ENCODE measurements at regions of chr17 and their contacts with region 1.

Region 1: GRCh38 chr17:46876353-46876887 is 25.0 kb downstream of the WNT9B start:
- H3K4me3 Mint-ChIP-seq: no peak overlapping the region
- H3K27ac Mint-ChIP-seq: peak overlapping the region; percentile 90
- H3K4me1 Mint-ChIP-seq: peaks cover 67% of the 10 kb centered on the region
- H3K27me3 Mint-ChIP-seq: no peaks in the 10 kb centered on the region

Region 2: GRCh38 chr17:46922804-46923635 is 46.6 kb after region 1 on chr17 and contains the start of gene GOSR2:
- intact Hi-C with region 1: loop called (anchors 2 kb)
- H3K4me3 Mint-ChIP-seq: peak within 1 kb of the TSS; percentile 85
- H3K27ac Mint-ChIP-seq: peak within 1 kb of the TSS; percentile 98
- H3K4me1 Mint-ChIP-seq: peaks cover 34% of the 10 kb centered on the region
- H3K27me3 Mint-ChIP-seq: peaks cover 2% of the 10 kb centered on the region

Measured in dendritic cell treated with granulocyte-macrophage colony-stimulating factor and Interleukin-4, amounts not matched to agents 40 ng/mL and 50 ng/mL, for 4 days (primary cell).